Sciatic nerve (tissue), 2 donors: ENCODE measurements at regions of chrX and their contacts with region 1.

Region 1: GRCh38 chrX:69538321-69538876 is 34.3 kb downstream of the NALF2 start:
- DNase-seq: peak; percentile 89
- ATAC-seq: peak; percentile 96

Region 2: GRCh38 chrX:70030301-70030767 is 491.9 kb after region 1 on chrX:
- intact Hi-C with region 1: loop called (anchors 10 kb)
- DNase-seq: no peak
- ATAC-seq: peak; percentile 69

Region 3: GRCh38 chrX:70096052-70096451 is 557.7 kb after region 1 on chrX:
- intact Hi-C with region 1: loop called (anchors 10 kb)
- DNase-seq: no peak
- ATAC-seq: no peak